ENCODE measurements at regions of chr6 and their contacts with region 1.

Region 1: GRCh38 chr6:31087494-31088089 is 24.8 kb downstream of the C6orf15 start:
- DNase-seq: peak; percentile 93
- H3K4me3 ChIP-seq: peak overlapping the region in 1 of 3 experiments; percentile 42
- H3K27ac ChIP-seq: peak overlapping the region; percentile 84
- H3K4me1 ChIP-seq: peaks cover 12% of the 10 kb centered on the region
- H3K27me3 ChIP-seq: no peaks in the 10 kb centered on the region
- CTCF ChIP-seq: peak; percentile 72 to 74
- POLR2A ChIP-seq: no peak

Region 2: DNA sequence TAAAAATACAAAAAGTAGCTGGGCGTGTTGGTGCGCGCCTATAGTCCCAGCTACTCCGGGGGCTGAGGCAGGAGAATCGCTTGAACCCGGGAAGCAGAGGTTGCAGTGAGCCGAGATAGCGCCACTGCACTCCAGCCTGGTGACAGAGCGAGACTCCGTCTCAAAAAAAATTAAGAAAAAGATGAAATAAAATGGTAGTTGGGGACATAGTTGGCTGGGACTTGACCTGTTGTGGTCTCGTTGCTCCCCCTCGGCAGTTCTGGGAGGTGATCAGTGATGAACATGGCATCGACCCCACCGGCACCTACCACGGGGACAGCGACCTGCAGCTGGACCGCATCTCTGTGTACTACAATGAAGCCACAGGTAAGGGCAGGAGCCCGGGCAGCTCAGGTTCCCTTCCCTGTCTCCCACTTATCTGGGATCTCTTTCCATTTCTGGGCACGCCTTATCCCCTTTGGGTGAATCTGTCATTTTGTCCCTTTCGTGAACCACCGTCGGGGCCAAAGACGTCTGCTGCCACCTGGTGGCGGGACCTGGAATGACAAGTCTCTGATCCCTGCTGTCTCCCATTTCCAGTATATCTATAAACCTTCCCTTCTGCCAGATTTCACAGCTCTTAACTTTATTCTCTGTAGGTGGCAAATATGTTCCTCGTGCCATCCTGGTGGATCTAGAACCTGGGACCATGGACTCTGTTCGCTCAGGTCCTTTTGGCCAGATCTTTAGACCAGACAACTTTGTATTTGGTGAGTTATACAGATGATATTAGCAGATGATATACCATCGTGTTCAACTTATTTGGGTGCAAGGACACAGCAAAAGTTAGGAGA is 365.1 kb before region 1 on chr6:
- CTCF ChIA-PET with region 1: interaction called, 18 read pairs
- POLR2A ChIA-PET with region 1: no interaction called
- dilution Hi-C with region 1: no loop called
- intact Hi-C with region 1: no loop called
- DNase-seq: peak; percentile 82
- H3K4me3 ChIP-seq: peak overlapping the region in 2 of 3 experiments; percentile 76 to 94
- H3K27ac ChIP-seq: no peak overlapping the region
- H3K4me1 ChIP-seq: peaks cover 37% of the 10 kb centered on the region
- H3K27me3 ChIP-seq: no peaks in the 10 kb centered on the region
- CTCF ChIP-seq: peak; percentile 83 to 87
- POLR2A ChIP-seq: peak; percentile 76

Region 3: DNA sequence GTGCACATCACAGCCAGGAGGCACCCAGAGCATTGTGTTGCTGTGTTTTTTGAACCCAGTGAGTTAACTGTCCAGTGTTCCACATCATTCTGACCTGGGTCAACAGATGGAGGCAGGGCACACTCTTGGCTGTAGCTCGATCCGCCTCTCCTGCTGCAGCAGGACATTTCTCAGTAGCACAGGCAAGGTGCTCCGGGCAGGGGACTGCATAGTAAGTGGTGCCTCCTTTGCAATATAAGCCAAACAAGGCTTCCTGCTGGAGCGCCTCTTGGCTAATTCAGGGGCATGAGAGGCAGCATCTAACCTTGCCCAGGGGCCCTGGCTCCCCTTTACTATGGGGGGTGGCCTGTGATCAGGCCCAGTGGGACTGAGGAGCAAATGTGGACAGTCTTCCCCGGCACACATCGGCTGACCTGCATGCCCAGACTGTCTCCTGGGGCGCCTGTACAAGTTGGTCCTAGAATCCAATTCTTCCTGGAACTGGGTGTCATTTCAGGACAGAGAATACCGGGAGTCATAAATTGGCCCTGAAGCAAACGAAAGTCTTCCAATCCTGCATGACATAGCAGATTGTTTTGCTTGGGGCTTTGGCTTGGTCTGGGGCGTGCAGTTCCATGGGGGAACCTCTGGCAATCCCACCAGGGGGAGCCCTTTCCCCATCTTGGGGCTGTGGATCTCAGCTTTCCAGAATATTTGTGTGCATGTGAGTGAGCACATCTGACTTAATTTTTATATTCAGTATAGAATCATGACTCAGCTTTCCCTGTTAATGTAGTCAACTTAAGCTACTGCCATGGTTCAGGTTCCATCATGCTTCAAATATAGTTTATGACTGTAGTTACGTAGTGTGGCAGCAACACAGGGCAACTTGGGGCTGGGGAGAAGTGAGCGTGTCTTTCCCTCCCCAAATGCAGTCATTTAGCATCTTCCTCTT is 259.3 kb before region 1 on chr6:
- CTCF ChIA-PET with region 1: interaction called, 69 read pairs
- POLR2A ChIA-PET with region 1: no interaction called
- dilution Hi-C with region 1: no loop called
- intact Hi-C with region 1: loop called (anchors 1 kb)
- DNase-seq: peak; percentile 92
- H3K4me3 ChIP-seq: no peak overlapping the region
- H3K27ac ChIP-seq: no peak overlapping the region
- H3K4me1 ChIP-seq: peaks cover 15% of the 10 kb centered on the region
- H3K27me3 ChIP-seq: no peaks in the 10 kb centered on the region
- CTCF ChIP-seq: peak; percentile 89
- POLR2A ChIP-seq: no peak

Region 4: GRCh38 chr6:30907758-30908591 is 179.6 kb before region 1 on chr6 and contains the start of gene GTF2H4:
- CTCF ChIA-PET with region 1: interaction called, 142 read pairs
- POLR2A ChIA-PET with region 1: no interaction called
- dilution Hi-C with region 1: no loop called
- intact Hi-C with region 1: no loop called
- DNase-seq: peak; percentile 99
- H3K4me3 ChIP-seq: peak within 1 kb of the TSS; percentile 94 to 96 (median 94)
- H3K27ac ChIP-seq: peak within 1 kb of the TSS; percentile 7
- H3K4me1 ChIP-seq: peaks cover 9% of the 10 kb centered on the region
- H3K27me3 ChIP-seq: no peaks in the 10 kb centered on the region
- CTCF ChIP-seq: no peak
- POLR2A ChIP-seq: no peak
- total RNA-seq, gene GTF2H4: 51.0 and 52.6 TPM in 2 replicates

Region 5: DNA sequence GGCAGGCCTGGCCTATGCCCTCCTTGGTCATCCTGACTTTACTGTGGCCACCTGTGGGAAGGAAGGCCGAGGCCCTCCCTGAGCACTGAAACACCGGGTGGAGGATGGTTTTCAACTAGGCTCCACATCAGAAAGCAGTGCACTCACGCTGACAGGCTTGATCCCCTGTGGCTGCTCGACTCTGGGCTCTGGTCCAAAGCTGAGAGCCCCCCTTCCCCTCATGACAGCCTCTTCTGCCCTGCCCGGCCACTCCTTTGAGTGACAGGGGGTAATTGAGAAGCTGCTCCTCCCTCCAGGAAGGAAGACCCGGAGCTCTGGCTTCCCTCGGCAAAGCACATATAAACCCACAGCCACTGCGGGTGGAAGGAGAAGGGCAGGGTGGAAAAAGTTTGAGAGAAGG is 33.7 kb before region 1 on chr6:
- CTCF ChIA-PET with region 1: no interaction called
- POLR2A ChIA-PET with region 1: no interaction called
- dilution Hi-C with region 1: no loop called
- intact Hi-C with region 1: no loop called
- DNase-seq: no peak
- H3K4me3 ChIP-seq: no peak overlapping the region
- H3K27ac ChIP-seq: no peak overlapping the region
- H3K4me1 ChIP-seq: no peaks in the 10 kb centered on the region
- H3K27me3 ChIP-seq: peaks cover 7 to 11% of the 10 kb centered on the region in 2 experiments
- CTCF ChIP-seq: no peak
- POLR2A ChIP-seq: no peak

Region 6: DNA sequence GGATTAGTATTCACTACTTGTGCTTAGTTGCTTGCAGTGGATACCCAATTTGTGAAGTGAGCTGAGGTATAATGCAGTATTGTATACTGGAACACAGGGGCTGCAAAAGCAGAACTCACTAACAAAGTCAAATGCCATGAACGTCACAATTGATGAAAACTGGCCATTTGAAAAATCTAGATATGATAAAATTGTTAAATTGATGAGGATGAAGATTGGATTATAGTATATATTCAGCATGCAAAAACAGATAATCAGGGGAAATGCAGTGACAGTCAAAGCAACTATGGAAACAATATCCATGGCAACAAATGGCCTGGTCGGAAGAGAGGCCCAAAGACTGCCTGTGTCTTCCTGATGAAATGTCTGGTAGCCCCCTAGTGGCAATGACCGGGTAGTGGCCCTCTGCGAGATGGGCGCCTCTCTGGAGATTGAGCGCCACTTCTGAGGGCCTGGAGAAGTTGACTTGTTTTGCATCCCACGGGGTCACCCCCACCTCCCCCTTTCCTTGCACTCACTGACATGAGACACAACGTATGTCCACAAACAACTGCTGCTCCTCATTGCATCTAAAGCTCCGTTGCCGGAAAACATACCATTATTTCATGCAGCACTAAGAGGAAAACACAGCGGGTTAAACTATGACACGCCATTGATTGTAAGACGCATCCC is 18.8 kb before region 1 on chr6:
- CTCF ChIA-PET with region 1: interaction called, 33 read pairs
- POLR2A ChIA-PET with region 1: no interaction called
- dilution Hi-C with region 1: no loop called
- intact Hi-C with region 1: no loop called
- DNase-seq: peak; percentile 73
- H3K4me3 ChIP-seq: no peak overlapping the region
- H3K27ac ChIP-seq: no peak overlapping the region
- H3K4me1 ChIP-seq: peaks cover 6% of the 10 kb centered on the region
- H3K27me3 ChIP-seq: peaks cover 5 to 8% of the 10 kb centered on the region in 2 experiments
- CTCF ChIP-seq: peak; percentile 82 to 91
- POLR2A ChIP-seq: no peak

Region 7: GRCh38 chr6:31525932-31526591 is 438.5 kb after region 1 on chr6:
- CTCF ChIA-PET with region 1: no interaction called
- POLR2A ChIA-PET with region 1: no interaction called
- dilution Hi-C with region 1: no loop called
- intact Hi-C with region 1: no loop called
- DNase-seq: peak; percentile 80
- H3K4me3 ChIP-seq: no peak overlapping the region
- H3K27ac ChIP-seq: peak overlapping the region; percentile 98
- H3K4me1 ChIP-seq: peaks cover 24% of the 10 kb centered on the region
- H3K27me3 ChIP-seq: no peaks in the 10 kb centered on the region
- CTCF ChIP-seq: no peak
- POLR2A ChIP-seq: no peak

Measured in endothelial cell of umbilical vein (primary cell).